Transverse colon (tissue), 4 donors: ENCODE measurements at regions of chr19 and their contacts with region 1.

Region 1: DNA sequence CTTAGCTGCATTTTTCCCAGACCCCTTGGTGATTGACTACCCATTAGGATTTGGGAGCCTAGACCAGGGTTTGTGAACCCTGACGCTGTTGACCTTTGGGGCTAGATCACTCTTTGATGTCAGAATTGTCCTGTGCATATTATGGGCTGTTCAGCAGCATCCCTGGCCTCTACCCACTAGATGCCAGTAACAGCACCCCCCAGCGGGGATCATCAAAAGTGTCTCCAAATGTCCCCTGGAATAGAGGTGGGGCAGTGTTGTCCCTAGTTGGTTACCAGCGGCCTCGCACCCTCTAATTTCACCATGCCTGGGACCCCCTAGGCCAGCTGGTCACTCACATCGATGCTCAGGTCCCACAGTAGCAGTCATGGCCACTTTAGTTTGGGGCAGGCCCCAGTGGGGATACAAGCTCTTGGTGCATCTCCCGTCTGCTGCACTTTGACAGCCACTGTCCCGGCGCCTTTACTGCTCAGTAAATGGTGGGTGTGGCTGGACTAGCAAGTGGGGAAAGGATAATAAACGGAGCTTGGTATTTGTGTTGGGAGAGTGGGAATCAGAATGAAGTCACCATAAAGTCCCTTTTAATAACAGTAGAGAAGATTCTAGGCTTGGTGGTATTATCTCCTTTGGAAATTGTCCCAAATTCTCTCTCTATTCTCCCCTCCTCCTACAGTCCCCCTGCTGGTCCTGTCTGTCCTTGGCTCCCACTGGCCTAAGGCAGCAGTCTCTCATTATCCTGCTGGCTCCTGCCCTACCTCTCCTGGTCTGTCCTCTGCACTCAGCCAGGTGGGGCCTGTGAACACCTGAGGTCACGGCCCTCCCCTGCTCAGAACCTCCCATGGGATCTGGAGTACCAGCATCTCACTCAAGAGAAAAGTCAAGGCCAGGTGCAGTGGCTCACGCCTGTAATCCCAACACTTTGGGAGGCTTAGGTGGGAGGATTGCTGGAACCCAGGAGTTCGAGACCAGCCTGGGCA is 80.6 kb downstream of the SIPA1L3 start:
- DNase-seq: peak; percentile 62
- H3K4me3 ChIP-seq: no peak overlapping the region
- H3K27ac ChIP-seq: peak overlapping the region; percentile 6 to 71 (median 54)
- H3K4me1 ChIP-seq: peaks cover 0 to 22% (median 9%) of the 10 kb centered on the region in 4 donors
- H3K27me3 ChIP-seq: no peaks in the 10 kb centered on the region
- CTCF ChIP-seq: peak in 2 of 5 experiments; percentile 9 to 29
- EP300 ChIP-seq: no peak
- POLR2A ChIP-seq: no peak

Region 2: DNA sequence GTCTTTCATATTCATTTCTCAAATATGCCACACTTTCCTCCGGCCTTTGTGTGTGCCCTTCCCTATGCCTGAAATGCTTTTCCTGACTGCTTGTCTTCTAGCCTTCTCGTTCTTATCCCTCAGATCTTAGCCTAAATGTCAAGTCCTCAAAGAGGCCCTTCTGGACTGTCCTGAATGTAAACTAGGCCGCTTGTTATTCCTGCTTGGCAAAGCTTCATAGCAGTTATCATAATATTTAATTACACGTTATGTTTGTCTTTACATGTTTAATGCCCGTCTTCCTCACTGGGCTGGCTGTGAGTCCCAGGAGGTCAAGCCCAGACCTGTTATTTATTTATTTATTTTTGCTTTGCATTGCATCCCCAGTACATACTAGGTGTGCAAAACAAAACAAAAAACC is 18.0 kb before region 1 on chr19:
- in situ Hi-C with region 1: no loop called
- intact Hi-C with region 1: loop called (anchors 1 kb)
- DNase-seq: no peak
- H3K4me3 ChIP-seq: no peak overlapping the region
- H3K27ac ChIP-seq: no peak overlapping the region
- H3K4me1 ChIP-seq: peaks cover 0 to 17% (median 6%) of the 10 kb centered on the region in 4 donors
- H3K27me3 ChIP-seq: no peaks in the 10 kb centered on the region
- CTCF ChIP-seq: no peak
- EP300 ChIP-seq: no peak
- POLR2A ChIP-seq: no peak